ENCODE measurements at regions of chr10 and their contacts with region 1.

Region 1: DNA sequence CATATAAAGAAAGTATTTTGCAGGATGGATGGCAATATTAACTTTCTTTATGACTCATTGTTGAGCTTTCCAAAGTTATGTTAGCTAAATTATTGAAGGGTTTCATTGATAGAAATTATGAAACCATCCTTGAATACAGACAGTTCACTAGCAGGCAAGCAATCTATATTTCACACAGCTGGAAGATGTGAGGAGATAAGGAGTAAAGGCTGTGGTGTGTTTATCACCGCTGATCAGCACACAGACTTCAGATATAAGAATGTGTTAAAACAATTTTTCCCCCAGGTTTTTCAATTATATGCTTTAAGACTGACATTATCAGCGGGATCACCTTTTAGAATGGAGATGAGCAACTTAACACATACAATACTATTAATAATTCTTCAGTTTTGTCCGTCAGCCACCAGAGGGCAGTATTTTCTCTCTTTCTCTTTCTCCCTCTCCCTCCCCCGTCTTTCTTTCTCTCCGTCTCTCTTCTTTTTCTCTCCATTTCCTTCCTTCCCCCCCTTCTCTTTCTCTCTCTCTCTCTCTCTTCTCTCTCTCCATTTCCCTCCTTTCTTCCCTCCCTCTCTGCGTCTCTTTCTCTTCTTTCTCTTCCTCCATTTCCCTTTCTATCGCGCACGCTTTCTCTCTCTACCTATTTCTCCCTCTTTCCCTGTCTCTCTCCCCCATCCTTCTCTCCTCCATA is 62.9 kb upstream of the FAM171A1 start:
- DNase-seq: peak in 6 of 9 donors; percentile 16 to 61 (median 52)
- ATAC-seq: peak; percentile 61
- H3K4me3 ChIP-seq: peak overlapping the region; percentile 19
- H3K4me3 Mint-ChIP-seq: peak overlapping the region; percentile 61 to 88 (median 82)
- H3K27ac ChIP-seq: no peak overlapping the region
- H3K27ac Mint-ChIP-seq: peak overlapping the region in 1 of 9 donors; percentile 90
- H3K4me1 ChIP-seq: no peaks in the 10 kb centered on the region
- H3K4me1 Mint-ChIP-seq: peaks cover 6 to 10% (median 8%) of the 10 kb centered on the region in 7 donors
- H3K27me3 ChIP-seq: peaks cover 0 to under 1% of the 10 kb centered on the region in 2 donors
- H3K27me3 Mint-ChIP-seq: peaks cover 12 to 41% (median 31%) of the 10 kb centered on the region in 5 donors

Region 2: DNA sequence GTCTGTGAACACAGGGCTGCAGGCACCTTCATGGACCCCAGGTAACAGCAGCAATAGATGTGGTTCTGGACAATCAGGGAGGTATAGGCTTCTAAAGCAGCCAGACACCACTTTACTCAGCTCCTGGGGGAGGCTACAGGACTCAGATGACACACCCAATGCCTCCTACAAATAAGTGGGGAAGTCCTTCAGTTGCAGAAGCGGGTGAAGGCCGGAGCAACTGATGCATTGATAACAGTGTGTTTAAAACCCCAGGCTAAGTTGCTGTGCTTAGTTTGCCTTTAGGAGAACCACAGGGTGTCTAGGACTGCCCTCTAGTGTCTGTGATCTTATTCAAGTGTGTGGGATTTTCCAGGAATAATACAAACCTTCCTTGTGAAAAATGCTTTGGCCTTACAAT is 291.6 kb after region 1 on chr10:
- CTCF ChIA-PET with region 1: no interaction called
- POLR2A ChIA-PET with region 1: no interaction called
- intact Hi-C with region 1: loop called in 1 of 2 experiments (anchors 5 kb)
- DNase-seq: no peak
- ATAC-seq: no peak
- H3K4me3 ChIP-seq: no peak overlapping the region
- H3K4me3 Mint-ChIP-seq: no peak overlapping the region
- H3K27ac ChIP-seq: no peak overlapping the region
- H3K27ac Mint-ChIP-seq: no peak overlapping the region
- H3K4me1 ChIP-seq: no peaks in the 10 kb centered on the region
- H3K4me1 Mint-ChIP-seq: no peaks in the 10 kb centered on the region
- H3K27me3 ChIP-seq: no peaks in the 10 kb centered on the region
- H3K27me3 Mint-ChIP-seq: peaks cover 19 to 51% (median 37%) of the 10 kb centered on the region in 5 donors

Region 3: DNA sequence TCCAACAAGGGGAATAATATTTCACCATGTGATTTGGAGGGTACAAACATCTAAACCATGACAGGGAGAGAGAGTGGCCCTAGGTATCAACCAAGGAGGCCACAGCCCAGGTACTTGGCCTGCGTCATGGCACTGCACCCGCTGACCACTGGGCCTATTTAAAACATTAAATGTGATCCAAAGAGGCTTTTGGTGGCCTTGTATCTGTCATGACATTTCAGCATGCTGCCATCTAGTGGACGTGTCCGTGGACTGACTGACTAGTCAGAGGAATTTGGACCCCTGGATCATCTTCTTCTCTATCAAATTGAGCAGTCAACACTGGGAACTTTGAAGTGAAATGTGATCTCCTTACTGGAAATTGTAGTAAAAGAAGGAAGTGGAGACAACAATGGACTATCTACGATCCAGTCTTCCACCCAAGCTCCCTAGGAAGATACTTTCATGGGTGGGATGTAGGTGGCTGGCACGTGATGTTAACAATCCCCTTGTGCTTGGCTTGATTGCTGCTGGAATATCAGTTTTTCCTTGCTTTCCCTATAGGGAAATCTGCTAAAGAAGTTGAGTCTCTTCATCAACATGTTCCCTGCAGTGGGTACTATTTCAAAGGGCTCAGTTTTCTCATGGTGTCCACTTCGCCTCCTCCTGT is 310.3 kb after region 1 on chr10:
- CTCF ChIA-PET with region 1: no interaction called
- POLR2A ChIA-PET with region 1: no interaction called
- intact Hi-C with region 1: loop called (anchors 2 to 5 kb)
- DNase-seq: peak in 5 of 9 donors; percentile 3 to 27 (median 9)
- ATAC-seq: no peak
- H3K4me3 ChIP-seq: no peak overlapping the region
- H3K4me3 Mint-ChIP-seq: no peak overlapping the region
- H3K27ac ChIP-seq: no peak overlapping the region
- H3K27ac Mint-ChIP-seq: no peak overlapping the region
- H3K4me1 ChIP-seq: no peaks in the 10 kb centered on the region
- H3K4me1 Mint-ChIP-seq: no peaks in the 10 kb centered on the region
- H3K27me3 ChIP-seq: no peaks in the 10 kb centered on the region
- H3K27me3 Mint-ChIP-seq: peaks cover 3 to 27% (median 12%) of the 10 kb centered on the region in 5 donors

Region 4: DNA sequence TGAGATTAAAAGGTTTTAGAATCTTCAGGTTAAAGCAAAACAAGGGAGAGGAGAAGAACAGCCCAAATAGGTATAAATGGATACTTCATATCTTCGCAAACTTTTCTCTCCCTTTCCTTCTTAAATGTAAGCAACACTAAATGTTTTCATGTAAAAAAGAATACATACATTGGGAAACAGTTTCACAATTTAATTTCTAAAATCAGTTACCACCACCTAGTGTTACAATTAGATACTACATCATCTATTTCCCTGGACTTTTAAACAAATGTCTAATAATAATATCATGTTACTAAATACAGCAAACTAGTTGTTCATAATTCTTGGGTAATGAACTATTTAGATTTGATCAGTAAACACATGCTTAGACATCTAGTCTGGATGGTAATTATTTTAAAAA is 390.5 kb after region 1 on chr10:
- CTCF ChIA-PET with region 1: no interaction called
- POLR2A ChIA-PET with region 1: no interaction called
- intact Hi-C with region 1: loop called in 1 of 2 experiments (anchors 1 kb)
- DNase-seq: no peak
- ATAC-seq: no peak
- H3K4me3 ChIP-seq: no peak overlapping the region
- H3K4me3 Mint-ChIP-seq: no peak overlapping the region
- H3K27ac ChIP-seq: no peak overlapping the region
- H3K27ac Mint-ChIP-seq: no peak overlapping the region
- H3K4me1 ChIP-seq: no peaks in the 10 kb centered on the region
- H3K4me1 Mint-ChIP-seq: peaks cover 0 to 4% (median 0%) of the 10 kb centered on the region in 7 donors
- H3K27me3 ChIP-seq: no peaks in the 10 kb centered on the region
- H3K27me3 Mint-ChIP-seq: no peaks in the 10 kb centered on the region

Region 5: DNA sequence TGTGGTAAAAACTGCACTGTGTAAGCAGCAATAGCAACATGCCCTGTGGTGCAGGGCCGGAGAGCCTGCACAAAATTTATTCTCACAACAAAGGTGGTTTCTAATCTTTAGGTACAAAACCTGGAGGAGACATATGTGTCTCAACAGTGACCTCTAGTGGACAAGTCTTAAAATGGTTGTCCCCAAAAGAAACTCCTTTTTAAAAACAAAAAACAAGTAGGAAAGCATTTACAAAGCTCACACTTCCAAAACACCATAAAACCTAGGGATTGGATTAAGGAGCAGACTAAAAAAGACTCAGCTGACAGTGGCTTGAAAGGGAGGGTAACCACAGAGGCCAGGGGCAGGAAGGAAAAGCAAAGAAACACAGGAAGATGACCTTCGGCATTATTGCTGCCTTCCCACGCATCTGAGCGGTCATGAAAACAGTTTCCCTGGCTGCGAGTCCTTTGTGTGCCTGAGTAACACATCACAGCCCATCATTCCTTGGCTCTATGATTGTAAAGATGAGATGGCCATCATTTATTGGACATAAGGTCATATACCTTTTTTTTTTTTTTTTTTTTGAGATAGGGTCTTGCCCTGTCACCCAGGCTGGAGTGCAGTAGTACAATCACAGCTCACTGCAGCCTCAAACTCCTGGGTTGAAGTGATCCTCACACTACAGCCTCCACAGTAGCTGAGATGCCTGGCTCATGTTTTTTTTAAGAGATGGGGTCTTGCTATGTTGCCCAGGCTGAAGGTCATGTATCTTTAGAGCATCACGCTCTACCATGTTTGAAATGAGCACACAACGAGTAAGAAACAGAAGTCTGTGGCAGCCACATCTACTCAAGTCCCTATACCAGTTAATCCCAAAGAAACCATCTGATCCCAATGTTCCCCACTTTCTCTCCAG is 1343.7 kb after region 1 on chr10:
- CTCF ChIA-PET with region 1: interaction called, 4 read pairs
- POLR2A ChIA-PET with region 1: no interaction called
- intact Hi-C with region 1: loop called in 1 of 2 experiments (anchors 1 kb)
- DNase-seq: peak in 7 of 9 donors; percentile 26 to 64 (median 56)
- ATAC-seq: peak; percentile 77
- H3K4me3 ChIP-seq: no peak overlapping the region
- H3K4me3 Mint-ChIP-seq: peak overlapping the region in 4 of 10 donors; percentile 14 to 42 (median 21)
- H3K27ac ChIP-seq: no peak overlapping the region
- H3K27ac Mint-ChIP-seq: peak overlapping the region in 8 of 9 donors; percentile 57 to 89 (median 84)
- H3K4me1 ChIP-seq: peaks cover 0 to 11% of the 10 kb centered on the region in 2 donors
- H3K4me1 Mint-ChIP-seq: peaks cover 20 to 40% (median 32%) of the 10 kb centered on the region in 7 donors
- H3K27me3 ChIP-seq: no peaks in the 10 kb centered on the region
- H3K27me3 Mint-ChIP-seq: no peaks in the 10 kb centered on the region

Measured in naive thymus-derived CD4-positive, alpha-beta T cell (primary cell).